ENCODE measurements at regions of chr20 and their contacts with region 1.

Region 1: DNA sequence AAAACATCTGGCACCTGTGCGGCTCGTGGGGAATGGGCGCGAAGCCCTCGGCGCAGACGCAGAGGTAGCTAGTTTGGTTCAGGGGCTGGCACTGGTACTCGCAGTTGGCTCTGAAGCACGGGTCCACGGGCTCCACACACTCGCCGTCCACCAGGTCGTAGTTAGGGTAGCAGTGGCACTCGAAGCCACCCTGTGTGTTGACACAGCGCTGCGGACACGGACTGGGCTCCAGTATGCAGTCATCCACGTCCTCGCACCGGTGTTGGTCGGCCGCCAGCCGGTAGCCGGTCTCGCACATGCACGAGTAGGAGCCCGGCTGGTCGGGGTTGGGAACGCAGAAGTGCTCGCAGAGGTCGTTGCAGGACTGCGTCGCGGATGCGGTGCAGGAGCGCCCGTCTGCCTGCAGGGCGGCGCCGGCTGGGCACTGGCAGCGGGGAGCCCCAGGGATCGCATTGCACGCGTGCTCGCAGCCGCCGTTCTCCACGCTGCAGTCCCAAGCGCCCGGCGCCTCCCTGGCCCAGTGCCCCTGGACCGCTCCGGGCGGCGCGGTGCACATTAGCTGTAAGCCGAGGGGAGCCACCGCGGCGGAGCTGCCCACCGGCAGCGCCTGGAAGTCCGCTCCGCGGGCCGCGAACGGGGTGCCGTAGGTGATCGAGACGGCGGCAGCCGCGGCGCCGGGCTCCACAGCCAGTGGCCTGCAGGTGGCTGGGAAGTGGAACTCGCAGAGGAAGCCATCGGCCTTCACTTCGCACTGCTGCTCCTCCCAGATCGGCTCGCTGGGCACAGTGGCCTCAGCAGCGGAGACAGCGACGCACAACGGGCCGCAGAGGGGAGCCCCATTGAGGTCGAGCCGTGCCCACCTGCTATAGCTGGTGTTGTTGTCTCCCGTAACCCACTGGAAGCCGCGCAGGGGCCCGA is 930 bp downstream of the THBD start:
- DNase-seq: peak; percentile 50
- H3K4me3 ChIP-seq: peak overlapping the region; percentile 57 to 62
- H3K27ac ChIP-seq: peak overlapping the region in 1 of 2 donors; percentile 82
- H3K4me1 ChIP-seq: peaks cover 4% of the 10 kb centered on the region
- H3K27me3 ChIP-seq: no peaks in the 10 kb centered on the region
- CTCF ChIP-seq: peak in 2 of 3 experiments; percentile 32 to 52
- POLR2A ChIP-seq: no peak

Region 2: DNA sequence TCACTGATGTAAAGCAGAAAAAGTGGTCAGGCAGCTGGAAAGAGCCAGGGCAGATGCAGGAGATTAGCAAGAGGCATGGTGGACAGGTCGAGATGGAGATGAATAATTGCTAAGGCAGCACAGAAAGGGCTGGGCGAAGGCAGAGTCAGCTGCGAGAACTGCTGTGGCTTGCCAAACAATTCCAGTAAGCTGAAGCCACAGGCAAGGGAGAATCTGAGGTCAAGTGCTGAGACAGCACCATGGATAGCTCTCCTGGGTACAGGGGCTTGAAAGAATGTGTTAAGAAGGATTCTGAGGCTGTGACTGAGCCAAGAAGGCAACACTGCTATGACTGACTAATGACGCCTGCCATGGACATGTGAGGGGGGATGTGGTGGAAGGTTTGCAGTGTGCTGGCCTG is 243.3 kb before region 1 on chr20:
- intact Hi-C with region 1: no loop called
- DNase-seq: no peak
- H3K4me3 ChIP-seq: no peak overlapping the region
- H3K27ac ChIP-seq: no peak overlapping the region
- H3K4me1 ChIP-seq: no peaks in the 10 kb centered on the region
- H3K27me3 ChIP-seq: no peaks in the 10 kb centered on the region
- CTCF ChIP-seq: no peak
- POLR2A ChIP-seq: no peak

Region 3: GRCh38 chr20:23235173-23236027 is 186.9 kb after region 1 on chr20:
- intact Hi-C with region 1: loop called (anchors 10 kb)
- DNase-seq: peak; percentile 84
- H3K4me3 ChIP-seq: no peak overlapping the region
- H3K27ac ChIP-seq: no peak overlapping the region
- H3K4me1 ChIP-seq: peaks cover 11% of the 10 kb centered on the region
- H3K27me3 ChIP-seq: no peaks in the 10 kb centered on the region
- CTCF ChIP-seq: peak; percentile 75 to 83 (median 82)
- POLR2A ChIP-seq: no peak

Region 4: GRCh38 chr20:23331450-23332350 is 283.2 kb after region 1 on chr20:
- intact Hi-C with region 1: loop called (anchors 10 kb)
- DNase-seq: no peak
- H3K4me3 ChIP-seq: no peak overlapping the region
- H3K27ac ChIP-seq: no peak overlapping the region
- H3K4me1 ChIP-seq: no peaks in the 10 kb centered on the region
- H3K27me3 ChIP-seq: no peaks in the 10 kb centered on the region
- CTCF ChIP-seq: no peak
- POLR2A ChIP-seq: no peak